Naive thymus-derived CD4-positive, alpha-beta T cell (primary cell): ENCODE measurements at regions of chr1 and their contacts with region 1.

Region 1: DNA sequence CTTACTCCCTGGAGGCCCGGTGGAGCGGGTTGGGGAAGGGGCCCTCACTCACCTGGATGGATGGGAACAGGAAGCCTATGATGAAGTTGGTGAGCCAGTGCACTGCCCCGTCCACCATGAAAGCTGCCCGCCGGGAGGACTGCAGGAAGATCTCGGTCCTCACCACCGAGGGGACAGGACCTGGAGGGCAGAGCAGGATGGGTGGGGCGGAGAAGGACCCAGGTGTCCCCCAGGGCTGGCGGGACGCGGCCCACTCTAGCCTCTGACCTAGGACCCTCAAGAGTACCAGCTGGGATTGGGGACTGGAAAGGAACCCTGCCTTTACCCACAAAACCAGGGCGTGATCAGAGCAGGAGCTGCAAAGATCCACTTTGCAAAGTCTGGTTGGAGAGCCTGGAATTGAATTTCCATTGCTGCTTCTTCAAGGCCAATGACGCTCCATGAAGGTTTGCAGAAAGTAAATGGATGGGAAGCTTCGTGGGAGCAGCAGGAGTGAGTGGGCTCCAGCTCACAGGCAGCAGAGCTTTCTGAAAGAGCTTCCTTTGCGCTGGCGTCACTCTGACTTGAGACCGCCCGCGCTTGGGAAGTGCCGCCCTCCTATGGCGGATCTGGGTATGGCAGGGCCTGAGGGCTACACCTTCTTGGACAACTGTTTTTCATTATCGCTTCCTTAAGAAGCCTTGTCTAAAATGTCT is 21.4 kb downstream of the SLC2A7 start:
- DNase-seq: peak; percentile 63 to 89 (median 75)
- ATAC-seq: peak; percentile 96
- H3K4me3 ChIP-seq: no peak overlapping the region
- H3K4me3 Mint-ChIP-seq: peak overlapping the region in 8 of 10 donors; percentile 12 to 68 (median 49)
- H3K27ac ChIP-seq: peak overlapping the region; percentile 18
- H3K27ac Mint-ChIP-seq: peak overlapping the region in 4 of 9 donors; percentile 6 to 79 (median 32)
- H3K4me1 ChIP-seq: peaks cover 3 to 8% of the 10 kb centered on the region in 2 donors
- H3K4me1 Mint-ChIP-seq: peaks cover 0 to 12% (median 6%) of the 10 kb centered on the region in 7 donors
- H3K27me3 ChIP-seq: no peaks in the 10 kb centered on the region
- H3K27me3 Mint-ChIP-seq: no peaks in the 10 kb centered on the region

Region 2: GRCh38 chr1:8763888-8764287 is 241.0 kb before region 1 on chr1:
- CTCF ChIA-PET with region 1: no interaction called
- POLR2A ChIA-PET with region 1: no interaction called
- intact Hi-C with region 1: no loop called
- DNase-seq: no peak
- ATAC-seq: no peak
- H3K4me3 ChIP-seq: no peak overlapping the region
- H3K4me3 Mint-ChIP-seq: no peak overlapping the region
- H3K27ac ChIP-seq: no peak overlapping the region
- H3K27ac Mint-ChIP-seq: peak overlapping the region in 1 of 9 donors; percentile 16
- H3K4me1 ChIP-seq: no peaks in the 10 kb centered on the region
- H3K4me1 Mint-ChIP-seq: peaks cover 8 to 22% (median 12%) of the 10 kb centered on the region in 7 donors
- H3K27me3 ChIP-seq: no peaks in the 10 kb centered on the region
- H3K27me3 Mint-ChIP-seq: no peaks in the 10 kb centered on the region

Region 3: DNA sequence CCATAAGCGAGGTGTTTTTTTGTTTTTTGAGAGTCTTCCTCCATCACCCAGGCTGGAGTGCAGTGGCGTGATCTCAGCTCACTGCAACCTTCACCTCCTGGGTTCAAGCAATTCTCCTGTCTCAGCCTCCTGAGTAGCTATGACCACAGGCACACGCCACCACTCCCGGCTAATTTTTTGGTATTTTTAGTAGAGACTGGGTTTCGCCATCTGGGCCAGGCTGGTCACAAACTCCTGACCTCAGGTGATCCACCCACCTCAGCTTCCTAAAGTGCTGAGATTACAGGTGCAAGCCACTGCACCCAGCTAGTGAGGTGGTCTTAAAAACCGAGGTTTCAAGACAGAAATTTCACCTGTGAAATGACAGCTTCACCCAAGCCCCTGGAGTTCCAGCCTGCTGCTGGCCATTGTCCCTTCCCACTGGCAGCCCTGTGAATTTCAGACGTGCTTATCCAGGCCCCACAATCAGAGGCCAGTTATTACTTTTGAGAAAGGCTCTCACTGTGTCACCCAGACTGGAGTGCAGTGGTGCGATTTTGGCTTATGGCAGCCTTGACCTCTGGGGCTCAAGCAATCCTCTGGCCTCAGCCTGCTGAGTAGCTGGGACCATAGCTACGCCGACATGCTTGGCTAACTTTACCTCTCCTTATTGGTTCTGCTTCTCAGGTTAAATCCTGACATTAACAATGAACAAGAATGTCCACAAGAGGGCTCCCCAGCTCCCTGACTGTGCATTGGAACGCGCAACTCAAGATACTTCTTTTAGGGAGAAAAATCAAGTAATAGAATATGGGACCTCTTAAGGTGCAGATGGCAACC is 145.8 kb before region 1 on chr1:
- CTCF ChIA-PET with region 1: interaction called, 50 read pairs
- POLR2A ChIA-PET with region 1: interaction called, 6 read pairs
- intact Hi-C with region 1: loop called (anchors 1 kb)
- DNase-seq: peak in 7 of 9 donors; percentile 52 to 73 (median 61)
- ATAC-seq: peak; percentile 83
- H3K4me3 ChIP-seq: no peak overlapping the region
- H3K4me3 Mint-ChIP-seq: peak overlapping the region in 1 of 10 donors; percentile 61
- H3K27ac ChIP-seq: no peak overlapping the region
- H3K27ac Mint-ChIP-seq: peak overlapping the region; percentile 45 to 89 (median 78)
- H3K4me1 ChIP-seq: no peaks in the 10 kb centered on the region
- H3K4me1 Mint-ChIP-seq: peaks cover 0 to 48% (median 10%) of the 10 kb centered on the region in 7 donors
- H3K27me3 ChIP-seq: no peaks in the 10 kb centered on the region
- H3K27me3 Mint-ChIP-seq: no peaks in the 10 kb centered on the region

Region 4: DNA sequence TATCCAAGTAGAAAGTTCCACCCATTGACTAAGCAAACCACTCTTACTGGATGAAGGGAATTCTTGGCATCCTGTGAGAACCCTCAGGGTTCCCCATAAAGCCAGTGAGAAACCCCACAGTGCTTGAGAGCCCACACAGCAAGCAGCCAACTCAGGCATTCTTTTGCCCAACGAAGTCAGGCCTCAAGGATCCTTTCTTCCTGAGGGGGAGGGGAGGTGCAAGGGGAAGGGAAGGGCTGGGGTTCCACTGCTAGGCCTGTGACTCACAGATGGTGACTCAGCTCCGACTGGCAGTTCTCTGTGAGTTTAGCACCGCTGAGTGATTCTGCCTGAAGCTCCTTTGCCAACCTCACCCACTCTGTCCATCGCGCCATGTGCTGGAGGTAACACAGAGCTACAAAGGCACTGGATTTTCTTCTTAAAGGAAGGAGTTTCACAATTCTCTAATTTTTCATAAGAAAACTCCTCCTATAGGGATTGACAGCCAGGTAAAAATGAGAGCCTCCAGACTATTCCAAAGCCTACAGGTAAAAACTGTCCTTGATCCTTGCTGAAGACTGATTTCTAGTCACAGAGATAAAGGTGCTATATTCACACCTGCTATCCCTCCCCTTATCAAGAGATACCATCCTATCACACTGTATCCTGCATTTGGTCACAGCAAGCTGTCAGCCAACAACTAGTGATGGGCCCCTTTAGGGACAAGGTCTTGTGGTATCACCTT is 131.2 kb before region 1 on chr1:
- CTCF ChIA-PET with region 1: interaction called, 6 read pairs
- POLR2A ChIA-PET with region 1: interaction called, 4 read pairs
- intact Hi-C with region 1: loop called (anchors 1 kb)
- DNase-seq: peak in 2 of 9 donors; percentile 49 to 74
- ATAC-seq: peak; percentile 37
- H3K4me3 ChIP-seq: no peak overlapping the region
- H3K4me3 Mint-ChIP-seq: peak overlapping the region in 8 of 10 donors; percentile 9 to 99 (median 33)
- H3K27ac ChIP-seq: peak overlapping the region; percentile 49
- H3K27ac Mint-ChIP-seq: peak overlapping the region in 8 of 9 donors; percentile 9 to 85 (median 75)
- H3K4me1 ChIP-seq: peaks cover 39 to 41% of the 10 kb centered on the region in 2 donors
- H3K4me1 Mint-ChIP-seq: peaks cover 30 to 74% (median 60%) of the 10 kb centered on the region in 7 donors
- H3K27me3 ChIP-seq: no peaks in the 10 kb centered on the region
- H3K27me3 Mint-ChIP-seq: peaks cover 0 to 3% (median 0%) of the 10 kb centered on the region in 5 donors

Region 5: DNA sequence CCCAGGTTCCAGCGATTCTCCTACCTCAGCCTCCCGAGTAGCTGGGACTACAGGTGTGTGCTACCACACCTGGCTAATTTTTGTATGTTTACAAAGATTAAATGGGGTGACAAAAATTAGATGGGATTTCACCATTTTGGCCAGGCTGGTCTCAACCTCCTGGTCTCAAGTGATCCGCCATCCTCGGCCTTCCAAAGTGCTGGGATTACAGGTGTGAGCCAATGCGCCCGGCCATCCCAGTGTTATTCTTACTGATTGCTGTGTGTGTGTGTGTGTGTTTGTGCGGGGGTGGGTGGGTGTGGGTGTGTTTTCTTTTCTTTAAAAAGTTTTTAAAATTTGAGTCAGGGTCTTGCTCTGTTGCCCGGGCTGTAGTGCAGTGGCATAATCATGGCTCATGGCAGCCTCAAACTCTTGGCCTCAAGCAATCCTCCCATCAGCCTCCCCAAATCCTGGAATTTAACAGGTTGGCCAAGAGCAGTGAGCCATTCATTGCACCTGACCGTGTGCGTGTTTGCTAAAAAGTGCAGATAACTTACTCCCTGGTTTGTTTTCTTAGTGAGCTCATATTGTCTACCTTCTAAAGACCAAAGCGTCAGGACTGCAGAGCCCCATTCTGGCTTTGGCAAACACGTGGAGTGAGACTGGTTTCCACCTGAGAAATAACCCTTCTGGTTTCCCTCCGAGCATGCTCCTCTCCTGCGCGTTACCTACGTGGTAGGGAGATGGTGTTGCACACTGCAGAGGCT is 91.6 kb before region 1 on chr1:
- CTCF ChIA-PET with region 1: interaction called, 110 read pairs
- POLR2A ChIA-PET with region 1: interaction called, 30 read pairs
- intact Hi-C with region 1: loop called (anchors 1 kb)
- DNase-seq: no peak
- ATAC-seq: no peak
- H3K4me3 ChIP-seq: no peak overlapping the region
- H3K4me3 Mint-ChIP-seq: no peak overlapping the region
- H3K27ac ChIP-seq: no peak overlapping the region
- H3K27ac Mint-ChIP-seq: peak overlapping the region in 2 of 9 donors; percentile 3 to 20
- H3K4me1 ChIP-seq: peaks cover 0 to 2% of the 10 kb centered on the region in 2 donors
- H3K4me1 Mint-ChIP-seq: peaks cover 4 to 36% (median 5%) of the 10 kb centered on the region in 7 donors
- H3K27me3 ChIP-seq: no peaks in the 10 kb centered on the region
- H3K27me3 Mint-ChIP-seq: peaks cover 0 to 4% (median 0%) of the 10 kb centered on the region in 5 donors

Region 6: GRCh38 chr1:8970870-8971337 is 33.9 kb before region 1 on chr1:
- CTCF ChIA-PET with region 1: interaction called, 8 read pairs
- POLR2A ChIA-PET with region 1: interaction called, 11 read pairs
- intact Hi-C with region 1: loop called in 1 of 2 experiments (anchors 1 kb)
- DNase-seq: peak in 8 of 9 donors; percentile 59 to 84 (median 76)
- ATAC-seq: peak; percentile 91
- H3K4me3 ChIP-seq: peak overlapping the region; percentile 59
- H3K4me3 Mint-ChIP-seq: peak overlapping the region; percentile 94 to 100 (median 100)
- H3K27ac ChIP-seq: peak overlapping the region; percentile 87
- H3K27ac Mint-ChIP-seq: peak overlapping the region; percentile 89 to 99 (median 98)
- H3K4me1 ChIP-seq: peaks cover 7 to 22% of the 10 kb centered on the region in 2 donors
- H3K4me1 Mint-ChIP-seq: peaks cover 34 to 60% (median 52%) of the 10 kb centered on the region in 7 donors
- H3K27me3 ChIP-seq: no peaks in the 10 kb centered on the region
- H3K27me3 Mint-ChIP-seq: no peaks in the 10 kb centered on the region

Region 7: DNA sequence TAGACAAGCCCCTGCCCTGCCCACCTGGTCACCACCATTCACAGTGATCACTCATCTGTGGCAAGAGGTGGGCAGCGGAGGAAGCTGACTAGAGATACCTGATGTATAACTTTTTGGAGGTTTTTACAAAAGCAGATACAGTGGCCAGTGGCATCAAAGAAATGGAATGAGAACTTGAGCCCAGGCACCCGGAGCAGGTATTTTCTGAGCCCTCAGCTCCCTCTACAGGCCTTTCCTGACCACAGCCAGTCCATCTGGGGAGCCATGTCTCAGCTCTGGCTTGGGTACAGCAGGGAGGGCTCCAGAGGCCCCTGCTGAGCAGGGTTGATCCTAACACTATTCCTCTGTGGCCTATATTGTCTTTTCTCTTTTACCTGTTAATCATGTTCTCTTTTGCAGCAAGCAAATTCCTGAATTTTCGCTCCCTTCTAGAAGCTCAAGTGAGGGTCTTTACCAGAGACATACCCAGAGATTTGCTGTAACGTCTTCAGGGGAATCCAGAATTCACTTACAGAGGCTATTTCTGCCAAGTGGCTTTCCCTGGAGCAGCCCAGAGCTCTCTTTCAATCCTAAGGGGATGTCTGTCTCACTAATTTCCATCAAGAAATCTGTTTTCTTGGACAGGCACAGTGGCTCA is 96.8 kb after region 1 on chr1:
- CTCF ChIA-PET with region 1: interaction called, 9 read pairs
- POLR2A ChIA-PET with region 1: no interaction called
- intact Hi-C with region 1: loop called in 1 of 2 experiments (anchors 1 kb)
- DNase-seq: peak in 1 of 9 donors; percentile 16
- ATAC-seq: peak; percentile 64
- H3K4me3 ChIP-seq: no peak overlapping the region
- H3K4me3 Mint-ChIP-seq: no peak overlapping the region
- H3K27ac ChIP-seq: no peak overlapping the region
- H3K27ac Mint-ChIP-seq: no peak overlapping the region
- H3K4me1 ChIP-seq: no peaks in the 10 kb centered on the region
- H3K4me1 Mint-ChIP-seq: no peaks in the 10 kb centered on the region
- H3K27me3 ChIP-seq: no peaks in the 10 kb centered on the region
- H3K27me3 Mint-ChIP-seq: no peaks in the 10 kb centered on the region